Activated T-helper 1 cell treated with anti-CD3 and anti-CD28 coated beads, Interleukin-12 subunit alpha, Interleukin-12 subunit beta, Interleukin-2, Interleukin-4 antibody, amounts not matched to agents 30 ng/mL and 10 ng/mL and 1 ng/mL, durations not matched to agents 14 hours and 24 hours and 36 hours (primary cell): ENCODE measurements at regions of chr15 and their contacts with region 1.

Region 1: DNA sequence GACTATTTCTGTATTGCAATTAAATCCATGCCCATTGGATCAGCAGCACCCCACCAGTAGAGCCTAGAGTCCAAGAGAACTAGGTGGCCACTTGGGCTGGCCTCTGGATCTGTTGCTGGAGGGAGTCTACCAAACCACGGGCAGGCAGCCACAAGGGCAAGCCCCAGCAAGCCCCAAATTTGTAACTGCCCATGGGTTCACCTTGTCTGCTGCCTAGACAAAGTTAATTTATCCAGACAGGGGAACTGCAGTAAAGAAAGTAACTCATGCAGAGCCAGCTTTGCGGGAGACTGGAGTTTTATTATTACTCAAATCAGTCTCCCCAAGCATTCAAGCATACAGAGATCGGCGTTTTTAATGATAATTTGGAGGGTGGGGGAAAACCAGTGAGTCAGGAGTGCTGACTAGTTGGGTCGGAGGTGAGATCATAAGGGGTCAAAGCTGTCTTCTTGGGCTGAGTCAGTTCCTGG is 74.0 kb upstream of the TERB2 start:
- DNase-seq: peak; percentile 29
- H3K4me3 Mint-ChIP-seq: peak overlapping the region; percentile 34
- H3K27ac Mint-ChIP-seq: peak overlapping the region; percentile 61
- H3K4me1 Mint-ChIP-seq: peaks cover 29% of the 10 kb centered on the region
- H3K27me3 Mint-ChIP-seq: no peaks in the 10 kb centered on the region

Region 2: DNA sequence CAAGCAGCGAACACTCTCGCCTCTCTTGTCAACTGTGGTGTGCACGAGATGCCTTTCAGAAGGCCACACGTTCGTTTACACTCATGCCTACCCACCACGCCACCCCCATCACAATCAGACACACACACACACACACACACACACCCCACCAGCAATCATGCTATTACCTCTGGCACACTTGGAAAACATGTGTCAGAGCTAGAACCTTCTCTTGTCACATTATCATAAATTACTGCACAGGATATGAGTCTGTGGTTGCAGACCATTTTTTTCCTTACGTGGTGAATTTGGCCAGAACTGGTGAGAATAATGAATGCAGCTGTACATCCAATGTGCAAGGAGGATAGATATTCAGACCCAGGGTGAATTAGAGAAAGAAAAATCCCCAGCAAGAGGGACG is 93.8 kb before region 1 on chr15:
- intact Hi-C with region 1: no loop called
- DNase-seq: no peak
- H3K4me3 Mint-ChIP-seq: no peak overlapping the region
- H3K27ac Mint-ChIP-seq: peak overlapping the region; percentile 71
- H3K4me1 Mint-ChIP-seq: peaks cover 30% of the 10 kb centered on the region
- H3K27me3 Mint-ChIP-seq: no peaks in the 10 kb centered on the region

Region 3: GRCh38 chr15:44910981-44911625 is 28.6 kb after region 1 on chr15:
- intact Hi-C with region 1: loop called (anchors 2 kb)
- DNase-seq: no peak
- H3K4me3 Mint-ChIP-seq: no peak overlapping the region
- H3K27ac Mint-ChIP-seq: peak overlapping the region; percentile 63
- H3K4me1 Mint-ChIP-seq: no peaks in the 10 kb centered on the region
- H3K27me3 Mint-ChIP-seq: no peaks in the 10 kb centered on the region